Prostate gland (tissue), 2 donors: ENCODE measurements at regions of chr7 and their contacts with region 1.

Region 1: GRCh38 chr7:18770154-18770811 is 274.7 kb downstream of the HDAC9 start:
- DNase-seq: no peak
- H3K4me3 ChIP-seq: no peak overlapping the region
- H3K27ac ChIP-seq: no peak overlapping the region
- H3K4me1 ChIP-seq: no peaks in the 10 kb centered on the region
- H3K27me3 ChIP-seq: no peaks in the 10 kb centered on the region
- CTCF ChIP-seq: no peak
- POLR2A ChIP-seq: no peak

Region 2: DNA sequence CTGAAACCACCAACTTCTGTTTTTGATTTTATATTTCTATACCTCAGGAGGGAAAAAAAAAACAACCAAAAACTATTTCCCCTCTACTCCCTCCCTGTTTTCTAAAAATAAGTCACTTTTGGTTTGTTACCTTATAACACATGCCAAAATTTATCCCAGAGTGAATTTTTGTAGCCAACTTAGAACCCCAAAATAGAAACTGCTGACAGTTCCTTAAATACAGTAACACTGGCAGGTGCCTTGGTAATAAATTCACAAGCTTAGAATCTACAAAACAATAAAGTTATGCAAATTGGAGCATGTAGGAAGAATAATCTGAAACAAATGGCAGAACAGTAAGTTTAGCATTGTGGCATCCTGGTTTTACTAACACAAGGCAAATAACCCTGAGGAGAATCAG is 439.7 kb before region 1 on chr7:
- intact Hi-C with region 1: no loop called
- DNase-seq: no peak
- H3K4me3 ChIP-seq: no peak overlapping the region
- H3K27ac ChIP-seq: no peak overlapping the region
- H3K4me1 ChIP-seq: no peaks in the 10 kb centered on the region
- H3K27me3 ChIP-seq: no peaks in the 10 kb centered on the region
- CTCF ChIP-seq: no peak
- POLR2A ChIP-seq: no peak

Region 3: GRCh38 chr7:19262826-19263225 is 492.5 kb after region 1 on chr7:
- intact Hi-C with region 1: loop called (anchors 10 kb)
- DNase-seq: no peak
- H3K4me3 ChIP-seq: no peak overlapping the region
- H3K27ac ChIP-seq: no peak overlapping the region
- H3K4me1 ChIP-seq: no peaks in the 10 kb centered on the region
- H3K27me3 ChIP-seq: no peaks in the 10 kb centered on the region
- CTCF ChIP-seq: no peak
- POLR2A ChIP-seq: no peak